HepG2 (cell line): ENCODE measurements at regions of chr15 and their contacts with region 1.

Region 1: GRCh38 chr15:90931737-90932659 is at the start of gene HDDC3:
- DNase-seq: peak; percentile 86
- ATAC-seq: peak; percentile 69
- H3K4me3 ChIP-seq: peak within 1 kb of the TSS; percentile 67 to 91 (median 87)
- H3K27ac ChIP-seq: peak within 1 kb of the TSS; percentile 96
- H3K4me1 ChIP-seq: peaks cover 61% of the 10 kb centered on the region
- H3K27me3 ChIP-seq: no peaks in the 10 kb centered on the region; a peak in 2 of 5 replicates
- CTCF ChIP-seq: peak; percentile 93
- EP300 ChIP-seq: no peak
- POLR2A ChIP-seq: peak in 1 of 2 experiments; percentile 74; a peak in 2 of 4 replicates
- RAD21 ChIP-seq: peak; percentile 52; the same call in 1 of the 2 replicates
- total RNA-seq, gene HDDC3: 28.3 and 30.0 TPM in 2 replicates

Region 2: GRCh38 chr15:90869601-90870353 is 62.2 kb before region 1 on chr15:
- CTCF ChIA-PET with region 1: no interaction called
- POLR2A ChIA-PET with region 1: interaction called, 15 read pairs
- in situ Hi-C with region 1: no loop called
- intact Hi-C with region 1: no loop called
- DNase-seq: no peak
- ATAC-seq: no peak
- H3K4me3 ChIP-seq: no peak overlapping the region; a peak in 1 of 6 replicates
- H3K27ac ChIP-seq: no peak overlapping the region
- H3K4me1 ChIP-seq: peaks cover 75% of the 10 kb centered on the region
- H3K27me3 ChIP-seq: peaks cover 0 to 49% of the 10 kb centered on the region in 2 experiments
- CTCF ChIP-seq: no peak
- EP300 ChIP-seq: no peak
- POLR2A ChIP-seq: no peak
- RAD21 ChIP-seq: no peak

Region 3: DNA sequence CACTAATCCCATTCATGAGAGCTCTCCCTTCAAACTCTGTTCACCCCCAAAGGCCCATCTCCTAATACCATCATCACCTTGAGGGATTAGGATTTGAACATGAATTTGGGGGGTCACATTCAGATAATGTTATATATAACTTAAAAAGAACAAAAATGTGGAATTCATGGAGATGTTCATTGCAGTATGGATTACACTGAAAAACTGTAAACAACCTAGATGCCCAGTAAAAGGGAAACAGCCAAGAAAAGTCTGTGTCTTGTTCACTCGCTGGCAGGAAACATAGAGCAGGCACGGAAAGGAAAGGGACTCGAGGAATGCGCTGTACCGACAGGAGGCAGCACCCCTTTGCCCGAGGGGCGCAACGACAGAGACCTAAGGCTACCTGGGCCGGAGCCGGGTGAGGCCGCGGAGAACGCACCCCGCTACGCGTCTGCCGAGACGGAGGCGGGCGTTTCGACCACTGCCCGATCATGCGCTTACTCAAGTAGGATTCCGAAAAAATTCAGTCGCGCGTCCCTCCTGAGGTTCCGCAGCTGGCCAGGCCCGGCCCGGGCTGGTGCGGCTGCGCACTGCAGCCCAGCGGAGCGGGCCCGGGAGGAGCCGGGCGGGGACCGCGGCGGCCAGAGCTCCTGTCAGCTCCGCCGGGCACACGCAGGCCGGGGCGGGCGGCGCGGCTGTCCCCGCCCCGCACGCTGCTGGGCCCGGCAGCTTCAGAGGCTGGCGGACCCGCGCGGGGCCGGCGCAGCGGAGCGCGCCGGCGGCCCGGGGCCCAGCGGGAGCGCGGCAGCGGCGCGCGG is 29.8 kb before region 1 on chr15:
- CTCF ChIA-PET with region 1: interaction called, 5 read pairs
- POLR2A ChIA-PET with region 1: interaction called, 45 read pairs
- in situ Hi-C with region 1: no loop called
- intact Hi-C with region 1: loop called (anchors 1 kb)
- DNase-seq: peak; percentile 64
- ATAC-seq: peak; percentile 85
- H3K4me3 ChIP-seq: peak overlapping the region; percentile 71 to 89 (median 81)
- H3K27ac ChIP-seq: peak overlapping the region; percentile 64
- H3K4me1 ChIP-seq: peaks cover 20% of the 10 kb centered on the region
- H3K27me3 ChIP-seq: peaks cover 0 to 1% of the 10 kb centered on the region in 2 experiments; a peak in 1 of 5 replicates
- CTCF ChIP-seq: peak; percentile 90
- EP300 ChIP-seq: no peak
- POLR2A ChIP-seq: peak; percentile 37 to 39; a peak in 2 of 4 replicates
- RAD21 ChIP-seq: peak; percentile 52; the same call in 1 of the 2 replicates

Region 4: DNA sequence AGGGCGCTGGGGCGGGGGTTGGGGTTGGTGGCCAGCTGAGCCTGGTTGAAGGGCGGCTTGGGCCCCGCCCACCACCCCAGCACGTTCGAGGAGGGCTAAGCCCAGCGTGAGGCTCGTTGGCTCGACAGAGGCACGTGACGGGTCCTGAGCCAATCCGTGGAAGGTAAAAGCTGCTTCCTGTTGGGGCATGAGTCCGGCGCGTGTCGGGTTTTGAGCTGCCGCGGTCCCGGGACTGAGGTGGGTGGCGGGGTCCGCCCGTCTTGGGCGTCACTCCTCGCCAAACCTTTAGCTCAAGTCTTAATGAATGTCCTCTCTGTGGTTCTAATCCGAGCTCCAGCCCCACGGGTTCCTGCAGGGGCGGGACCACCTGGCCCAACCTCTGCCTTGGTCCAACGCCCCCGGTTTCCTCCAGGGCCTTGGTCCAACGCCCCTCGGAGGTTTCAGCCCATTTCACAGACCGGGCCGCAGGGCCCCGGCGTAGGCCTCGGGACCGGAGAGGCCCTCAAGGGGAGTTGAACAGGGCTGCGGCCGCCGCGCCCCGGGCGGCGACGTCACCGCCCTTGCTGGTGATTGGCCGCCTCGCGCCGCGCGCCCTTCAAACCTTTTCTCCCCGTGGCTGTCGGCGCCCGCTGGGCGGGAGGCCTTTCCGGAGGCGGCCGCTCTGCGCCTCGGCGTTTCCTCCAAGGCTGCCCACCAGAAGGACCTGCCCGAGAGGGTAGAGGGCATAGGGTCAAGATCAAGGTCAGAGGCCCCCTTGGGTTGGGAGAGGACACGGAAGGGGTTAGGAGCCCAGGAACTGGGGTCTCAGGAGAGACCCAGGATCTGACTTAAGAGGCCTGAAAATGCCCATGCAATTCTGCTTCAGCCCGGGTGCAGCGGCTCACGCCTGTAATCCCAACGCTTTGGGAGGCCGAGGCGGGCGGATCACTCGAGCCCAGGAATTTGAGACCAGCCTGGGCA is 23.0 kb after region 1 on chr15 and contains the start of gene RCCD1:
- CTCF ChIA-PET with region 1: no interaction called
- POLR2A ChIA-PET with region 1: interaction called, 26 read pairs
- in situ Hi-C with region 1: no loop called
- intact Hi-C with region 1: loop called (anchors 2 kb)
- DNase-seq: peak; percentile 94
- ATAC-seq: peak; percentile 95
- H3K4me3 ChIP-seq: peak within 1 kb of the TSS; percentile 60 to 77 (median 65)
- H3K27ac ChIP-seq: peak within 1 kb of the TSS; percentile 97
- H3K4me1 ChIP-seq: peaks cover 11% of the 10 kb centered on the region
- H3K27me3 ChIP-seq: no peaks in the 10 kb centered on the region
- CTCF ChIP-seq: no peak
- EP300 ChIP-seq: peak in 1 of 2 experiments; percentile 20; a peak in 1 of 4 replicates
- POLR2A ChIP-seq: peak; percentile 77 to 82
- RAD21 ChIP-seq: 0 out of 2 replicates have a peak, but pooled peaks have one; percentile 9
- total RNA-seq, gene RCCD1: 10.0 and 15.1 TPM in 2 replicates

Region 5: DNA sequence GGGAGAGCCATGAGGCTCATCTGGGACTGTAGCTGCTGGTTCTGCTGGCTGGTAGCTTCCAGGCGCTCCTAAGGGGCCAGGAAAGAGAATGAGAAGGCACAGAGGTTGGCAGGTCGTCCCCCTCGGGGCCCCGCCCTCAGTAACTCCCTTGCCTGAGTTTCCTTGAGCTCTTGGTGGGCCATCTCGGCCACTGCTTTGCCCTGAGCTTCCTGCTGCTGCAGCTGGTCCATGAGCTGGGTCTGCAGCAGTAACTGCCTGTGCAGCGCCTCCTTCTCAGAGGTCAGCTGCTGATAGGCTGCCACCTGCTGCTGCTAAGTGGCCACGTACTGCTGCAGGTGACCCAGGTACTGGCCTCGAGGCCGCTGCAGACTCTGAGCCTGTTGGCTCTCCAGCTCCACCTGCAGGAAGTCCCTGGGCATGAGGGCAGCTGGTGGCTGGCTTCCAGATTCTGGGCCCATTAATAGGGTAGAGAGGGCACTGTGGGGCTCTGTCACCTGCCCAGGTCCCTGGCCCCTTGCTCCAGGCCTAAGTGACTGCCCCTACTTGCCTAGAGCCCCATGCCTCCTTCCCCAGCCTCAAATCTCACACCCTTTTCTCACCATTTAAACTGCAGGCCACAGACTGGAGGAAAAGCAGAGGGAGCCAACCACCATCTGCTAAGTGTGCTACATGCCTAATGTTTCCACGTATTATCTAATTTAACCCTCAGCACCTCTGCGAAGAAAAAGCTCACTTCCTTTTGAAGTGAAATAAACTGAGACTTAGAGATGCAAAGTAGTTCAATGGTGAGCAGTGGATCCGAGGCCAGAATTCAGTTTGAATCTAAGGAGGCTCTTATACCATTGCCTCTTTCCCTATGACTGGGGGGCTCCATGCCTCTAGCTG is 101.2 kb after region 1 on chr15:
- CTCF ChIA-PET with region 1: interaction called, 4 read pairs
- POLR2A ChIA-PET with region 1: no interaction called
- in situ Hi-C with region 1: no loop called
- intact Hi-C with region 1: loop called (anchors 5 kb)
- DNase-seq: peak; percentile 75
- ATAC-seq: peak; percentile 96
- H3K4me3 ChIP-seq: peak overlapping the region in 1 of 3 experiments; percentile 64; a peak in 2 of 6 replicates
- H3K27ac ChIP-seq: no peak overlapping the region
- H3K4me1 ChIP-seq: no peaks in the 10 kb centered on the region
- H3K27me3 ChIP-seq: peaks cover 2 to 21% of the 10 kb centered on the region in 2 experiments; a peak in 3 of 5 replicates
- CTCF ChIP-seq: peak; percentile 98
- EP300 ChIP-seq: no peak
- POLR2A ChIP-seq: no peak
- RAD21 ChIP-seq: peak; percentile 82

Region 6: DNA sequence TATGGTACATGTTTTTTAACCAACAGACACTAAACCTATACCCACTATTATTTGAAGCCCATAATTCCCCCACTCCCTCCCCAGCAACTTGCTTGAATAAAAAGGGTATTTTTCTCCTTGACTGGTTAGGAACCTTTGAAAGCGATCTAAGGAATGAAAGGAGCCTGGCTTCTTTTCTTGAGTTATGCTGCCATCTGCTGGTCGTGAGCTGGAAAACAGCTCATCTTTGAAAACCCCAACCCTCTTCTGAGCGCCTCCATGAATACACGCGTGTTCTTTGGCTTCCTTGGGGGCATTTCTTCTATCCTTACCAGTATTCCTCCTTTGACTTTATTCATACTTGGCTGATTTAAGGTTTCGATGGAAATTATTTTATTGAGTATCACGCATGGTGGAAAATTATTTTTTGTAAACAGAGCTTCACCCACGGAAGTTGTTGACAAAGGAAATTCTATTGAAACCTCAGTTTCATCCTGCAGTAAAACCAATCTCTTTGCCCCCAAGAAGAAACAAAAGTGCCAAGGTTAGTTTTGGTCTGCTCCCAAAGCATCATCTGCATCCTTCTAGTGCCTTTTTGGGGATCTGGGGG is 339.7 kb after region 1 on chr15:
- CTCF ChIA-PET with region 1: no interaction called
- POLR2A ChIA-PET with region 1: no interaction called
- in situ Hi-C with region 1: loop called (anchors 25 kb)
- intact Hi-C with region 1: no loop called
- DNase-seq: peak; percentile 35
- ATAC-seq: peak; percentile 52; the same call in 2 of the 3 replicates
- H3K4me3 ChIP-seq: no peak overlapping the region
- H3K27ac ChIP-seq: no peak overlapping the region
- H3K4me1 ChIP-seq: no peaks in the 10 kb centered on the region
- H3K27me3 ChIP-seq: peaks cover 0 to 4% of the 10 kb centered on the region in 2 experiments; a peak in 1 of 5 replicates
- CTCF ChIP-seq: peak; percentile 79
- EP300 ChIP-seq: no peak
- POLR2A ChIP-seq: no peak
- RAD21 ChIP-seq: no peak